ENCODE measurements at regions of chr6 and their contacts with region 1.

Region 1: DNA sequence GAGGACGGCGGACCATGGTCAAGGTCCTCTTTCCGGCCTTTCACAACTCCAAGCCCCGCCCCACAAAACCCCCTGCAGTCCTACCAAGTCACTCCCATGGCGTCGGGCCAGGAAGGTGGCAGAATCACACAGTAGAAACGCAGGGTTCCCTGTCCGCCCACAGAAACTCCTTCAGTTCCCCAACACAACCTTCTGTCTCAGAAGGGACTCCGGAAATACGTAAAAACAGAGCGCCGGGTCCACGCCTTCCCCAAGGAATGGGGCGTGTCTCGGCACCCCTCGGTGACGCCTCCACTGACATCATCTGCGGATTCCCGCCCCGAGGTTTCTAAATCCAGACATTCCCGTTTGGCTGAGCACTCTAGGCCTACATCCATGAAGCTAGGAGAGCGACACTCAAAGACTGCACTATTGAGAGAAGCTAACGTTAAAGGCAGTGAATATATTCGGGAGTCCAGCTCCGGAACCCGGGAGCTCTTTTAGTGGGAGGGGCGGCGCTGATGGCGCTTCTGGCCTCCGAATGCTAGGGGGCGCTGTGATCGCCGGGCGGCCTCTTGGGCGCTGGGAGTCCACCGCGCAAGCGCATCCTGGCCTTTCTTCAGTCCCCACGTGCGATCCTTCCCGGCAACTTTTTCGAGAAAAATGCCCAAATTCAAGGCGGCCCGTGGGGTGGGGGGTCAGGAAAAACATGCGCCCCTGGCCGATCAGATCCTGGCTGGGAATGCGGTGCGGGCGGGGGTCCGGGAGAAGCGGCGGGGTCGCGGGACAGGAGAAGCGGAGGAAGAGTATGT is at the starts of genes BYSL and MED20:
- DNase-seq: peak; percentile 93
- H3K4me3 ChIP-seq: peak within 1 kb of the TSS; percentile 54 to 83 (median 82)
- H3K27ac ChIP-seq: peak within 1 kb of the TSS; percentile 94
- H3K4me1 ChIP-seq: peaks cover 38% of the 10 kb centered on the region
- H3K27me3 ChIP-seq: no peaks in the 10 kb centered on the region
- CTCF ChIP-seq: peak; percentile 98
- POLR2A ChIP-seq: peak; percentile 72
- total RNA-seq, gene BYSL: 41.8 and 45.7 TPM in 2 replicates
- total RNA-seq, gene MED20: 25.5 and 30.4 TPM in 2 replicates

Region 2: DNA sequence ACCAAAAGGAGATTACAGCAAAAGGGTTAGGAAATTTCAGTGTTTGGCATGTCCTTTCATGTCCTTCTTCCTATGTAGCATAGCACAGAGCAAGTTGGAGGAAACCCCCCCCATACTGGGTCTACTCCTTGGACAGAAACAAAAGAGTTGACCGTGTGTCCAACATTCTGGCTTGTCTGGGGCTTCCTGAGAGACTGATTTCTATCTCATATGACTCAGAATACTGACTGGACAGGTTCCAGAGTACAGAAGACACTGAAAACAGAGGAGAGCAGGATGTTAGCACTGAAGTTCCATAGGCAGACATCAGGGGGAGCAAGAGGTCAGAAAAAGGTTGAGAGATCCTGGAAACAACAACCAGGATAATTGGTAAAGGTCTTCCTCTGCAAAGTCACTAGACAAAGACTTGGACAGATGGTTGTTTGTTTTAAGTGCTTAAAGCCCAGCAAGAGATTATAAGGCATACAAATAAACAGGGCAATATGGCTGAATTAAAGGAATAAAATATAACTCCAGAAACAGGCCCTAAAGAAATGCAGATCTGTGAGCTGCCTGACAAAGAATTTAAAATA is 74.4 kb before region 1 on chr6:
- CTCF ChIA-PET with region 1: interaction called, 19 read pairs
- POLR2A ChIA-PET with region 1: interaction called, 3 read pairs
- dilution Hi-C with region 1: no loop called
- intact Hi-C with region 1: loop called (anchors 1 kb)
- DNase-seq: peak; percentile 99
- H3K4me3 ChIP-seq: peak overlapping the region in 1 of 3 experiments; percentile 16
- H3K27ac ChIP-seq: peak overlapping the region; percentile 96
- H3K4me1 ChIP-seq: peaks cover 17% of the 10 kb centered on the region
- H3K27me3 ChIP-seq: no peaks in the 10 kb centered on the region
- CTCF ChIP-seq: peak; percentile 79 to 85
- POLR2A ChIP-seq: peak; percentile 46

Region 3: GRCh38 chr6:41901882-41902519 is 19.1 kb before region 1 on chr6:
- CTCF ChIA-PET with region 1: interaction called, 13 read pairs
- POLR2A ChIA-PET with region 1: no interaction called
- dilution Hi-C with region 1: no loop called
- intact Hi-C with region 1: loop called (anchors 2 kb)
- DNase-seq: no peak
- H3K4me3 ChIP-seq: no peak overlapping the region
- H3K27ac ChIP-seq: no peak overlapping the region
- H3K4me1 ChIP-seq: no peaks in the 10 kb centered on the region
- H3K27me3 ChIP-seq: no peaks in the 10 kb centered on the region
- CTCF ChIP-seq: peak; percentile 19 to 30
- POLR2A ChIP-seq: no peak

Region 4: DNA sequence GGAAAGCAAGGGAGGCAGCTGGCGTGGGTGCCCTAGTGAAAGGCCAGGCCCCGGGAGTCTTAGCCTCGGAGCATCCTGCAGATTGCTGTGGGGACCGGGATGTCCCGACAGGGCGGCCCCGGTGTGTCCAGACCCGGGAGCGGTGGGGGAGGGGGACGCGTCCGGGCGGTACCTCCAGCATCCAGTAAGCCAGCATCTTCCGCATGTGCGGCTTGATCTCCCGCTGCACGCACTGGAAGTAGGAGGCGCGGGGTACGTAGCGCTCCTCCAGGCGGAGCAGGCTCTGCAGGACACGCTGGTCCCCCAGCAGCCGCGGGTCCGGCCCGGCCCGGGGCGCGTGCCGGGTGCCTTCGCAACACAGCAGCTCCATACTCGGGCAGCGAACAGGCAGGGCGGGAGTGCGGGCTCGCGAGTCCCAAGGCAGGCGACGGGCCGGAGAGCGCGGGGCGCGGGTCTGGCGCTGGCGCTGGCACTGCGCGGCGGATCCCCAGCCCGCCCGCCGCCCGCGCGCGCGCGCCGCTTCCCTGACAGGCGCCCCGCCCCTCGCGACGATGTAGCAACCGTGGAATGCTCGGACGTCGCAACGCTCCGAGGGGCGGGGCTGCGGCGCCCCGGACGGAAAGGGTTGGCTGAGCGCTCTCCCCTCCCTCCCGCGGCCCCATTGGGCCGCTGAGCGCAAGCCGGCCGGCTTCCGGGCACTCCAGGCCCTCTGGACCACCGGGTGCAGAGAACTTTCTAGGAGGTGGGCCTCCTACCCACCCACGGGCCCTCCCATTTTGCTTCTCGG is 20.4 kb after region 1 on chr6 and contains the start of gene CCND3:
- CTCF ChIA-PET with region 1: interaction called, 54 read pairs
- POLR2A ChIA-PET with region 1: interaction called, 3 read pairs
- dilution Hi-C with region 1: no loop called
- intact Hi-C with region 1: loop called (anchors 1 kb)
- DNase-seq: peak; percentile 78
- H3K4me3 ChIP-seq: peak within 1 kb of the TSS; percentile 58 to 88 (median 76)
- H3K27ac ChIP-seq: peak within 1 kb of the TSS; percentile 57
- H3K4me1 ChIP-seq: peaks cover 34% of the 10 kb centered on the region
- H3K27me3 ChIP-seq: no peaks in the 10 kb centered on the region
- CTCF ChIP-seq: no peak
- POLR2A ChIP-seq: peak; percentile 69
- total RNA-seq, gene CCND3: 87.5 and 96.7 TPM in 2 replicates

Region 5: DNA sequence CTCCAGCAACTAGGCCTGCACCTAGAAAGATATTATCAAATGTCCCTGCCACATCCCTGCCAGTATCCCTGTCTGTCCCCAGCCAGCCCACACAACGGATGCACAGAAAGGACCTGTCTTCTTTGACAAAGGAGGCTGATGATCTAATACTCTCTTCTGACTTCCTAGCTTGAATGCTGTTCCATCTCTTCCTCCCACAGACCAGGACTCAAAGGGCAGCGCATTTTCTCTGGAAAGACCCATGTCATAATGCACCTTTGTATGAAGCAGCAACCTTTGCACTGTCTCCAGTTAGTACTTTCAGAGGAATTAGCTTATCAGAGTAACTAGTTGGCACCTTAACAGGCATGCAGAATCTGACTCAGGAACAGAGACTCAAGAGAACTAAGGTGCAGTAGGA is 75.9 kb after region 1 on chr6:
- CTCF ChIA-PET with region 1: no interaction called
- POLR2A ChIA-PET with region 1: no interaction called
- dilution Hi-C with region 1: no loop called
- intact Hi-C with region 1: no loop called
- DNase-seq: no peak
- H3K4me3 ChIP-seq: no peak overlapping the region
- H3K27ac ChIP-seq: no peak overlapping the region
- H3K4me1 ChIP-seq: no peaks in the 10 kb centered on the region
- H3K27me3 ChIP-seq: no peaks in the 10 kb centered on the region
- CTCF ChIP-seq: no peak
- POLR2A ChIP-seq: no peak

Region 6: DNA sequence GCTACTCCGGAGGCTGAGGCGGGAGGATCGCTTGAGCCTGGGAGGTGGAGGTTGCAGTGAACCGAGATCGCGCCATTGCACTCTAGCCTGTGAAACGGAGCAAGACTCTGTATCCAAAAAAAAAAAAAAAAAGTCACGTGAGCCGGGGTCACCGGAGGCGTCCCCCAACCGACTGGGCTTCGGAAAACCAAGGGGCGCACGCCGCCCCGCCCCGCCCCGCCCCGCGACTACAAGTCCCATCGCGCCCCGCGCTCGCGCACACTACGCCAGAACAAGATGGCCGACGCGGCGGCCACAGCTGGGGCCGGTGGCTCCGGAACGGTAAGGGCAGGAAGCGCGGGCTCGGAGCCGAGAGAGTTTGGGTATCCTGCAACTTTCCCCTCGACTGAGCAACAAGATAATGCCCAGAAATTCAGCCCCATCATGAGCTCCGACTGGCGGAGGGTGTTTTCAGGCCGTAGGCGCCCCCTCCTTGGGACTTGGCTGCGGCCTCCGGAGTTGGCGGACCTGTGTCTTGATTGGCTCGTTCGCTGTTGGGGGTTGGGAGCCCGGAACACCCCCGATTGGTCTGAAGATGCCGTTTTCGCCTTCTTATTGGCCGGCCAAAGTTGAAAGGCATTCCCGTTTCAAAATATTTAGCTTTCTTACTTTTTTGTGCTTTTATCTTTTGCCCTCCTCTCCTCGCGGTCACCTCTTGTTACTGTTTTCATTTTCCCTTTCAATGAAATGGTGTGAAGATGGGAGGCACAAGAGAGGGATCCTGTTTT is 129.3 kb after region 1 on chr6 and contains the start of gene TAF8:
- CTCF ChIA-PET with region 1: interaction called, 32 read pairs
- POLR2A ChIA-PET with region 1: interaction called, 4 read pairs
- dilution Hi-C with region 1: no loop called
- intact Hi-C with region 1: no loop called
- DNase-seq: peak; percentile 92
- H3K4me3 ChIP-seq: peak within 1 kb of the TSS; percentile 83 to 92 (median 87)
- H3K27ac ChIP-seq: peak within 1 kb of the TSS; percentile 77
- H3K4me1 ChIP-seq: peaks cover 32% of the 10 kb centered on the region
- H3K27me3 ChIP-seq: no peaks in the 10 kb centered on the region
- CTCF ChIP-seq: no peak
- POLR2A ChIP-seq: peak; percentile 99
- total RNA-seq, gene TAF8: 32.4 and 32.9 TPM in 2 replicates

Region 7: GRCh38 chr6:42099340-42100028 is 178.4 kb after region 1 on chr6:
- CTCF ChIA-PET with region 1: no interaction called
- POLR2A ChIA-PET with region 1: no interaction called
- dilution Hi-C with region 1: no loop called
- intact Hi-C with region 1: no loop called
- DNase-seq: no peak
- H3K4me3 ChIP-seq: no peak overlapping the region
- H3K27ac ChIP-seq: no peak overlapping the region
- H3K4me1 ChIP-seq: peaks cover 5% of the 10 kb centered on the region
- H3K27me3 ChIP-seq: no peaks in the 10 kb centered on the region
- CTCF ChIP-seq: no peak
- POLR2A ChIP-seq: no peak

Region 8: DNA sequence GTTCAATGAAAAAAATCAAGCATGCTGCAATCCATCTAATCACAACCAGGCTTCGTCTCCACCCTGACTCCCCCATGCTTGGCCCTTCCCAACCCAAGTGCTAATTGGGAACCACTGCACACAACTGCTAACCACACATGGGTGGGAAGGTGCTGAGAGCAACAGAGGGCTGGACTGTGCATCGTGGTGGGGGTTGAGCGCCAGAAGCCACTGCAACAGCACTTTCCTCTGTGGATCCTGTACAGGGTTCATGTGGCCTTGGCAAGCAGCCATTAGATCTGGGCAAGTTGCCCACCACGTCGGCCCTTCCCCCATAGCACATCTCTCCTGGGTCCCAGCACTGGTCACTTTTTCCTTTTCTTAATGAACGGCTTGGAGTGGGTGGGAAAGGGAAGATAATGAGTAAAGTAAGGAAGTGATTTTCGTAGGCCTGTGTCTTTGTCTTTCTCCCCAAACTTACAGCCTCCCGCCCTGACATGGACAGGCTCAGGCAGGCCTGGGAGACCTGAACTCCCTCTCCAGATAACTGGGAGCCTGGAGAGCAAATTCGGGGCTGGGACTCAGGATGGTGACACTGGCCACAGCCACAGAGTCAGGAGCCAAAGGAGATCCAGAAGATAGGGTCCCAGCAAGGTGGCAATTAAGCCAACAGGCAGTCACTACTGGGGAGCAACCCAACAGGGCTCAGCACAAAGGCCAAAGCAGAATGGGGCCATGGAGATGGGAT is 331.0 kb after region 1 on chr6:
- CTCF ChIA-PET with region 1: no interaction called
- POLR2A ChIA-PET with region 1: no interaction called
- dilution Hi-C with region 1: no loop called
- intact Hi-C with region 1: no loop called
- DNase-seq: peak; percentile 74
- H3K4me3 ChIP-seq: no peak overlapping the region
- H3K27ac ChIP-seq: no peak overlapping the region
- H3K4me1 ChIP-seq: peaks cover 11% of the 10 kb centered on the region
- H3K27me3 ChIP-seq: no peaks in the 10 kb centered on the region
- CTCF ChIP-seq: no peak
- POLR2A ChIP-seq: no peak